HEK293 (cell line): ENCODE measurements at regions of chrX and their contacts with region 1.

Region 1: DNA sequence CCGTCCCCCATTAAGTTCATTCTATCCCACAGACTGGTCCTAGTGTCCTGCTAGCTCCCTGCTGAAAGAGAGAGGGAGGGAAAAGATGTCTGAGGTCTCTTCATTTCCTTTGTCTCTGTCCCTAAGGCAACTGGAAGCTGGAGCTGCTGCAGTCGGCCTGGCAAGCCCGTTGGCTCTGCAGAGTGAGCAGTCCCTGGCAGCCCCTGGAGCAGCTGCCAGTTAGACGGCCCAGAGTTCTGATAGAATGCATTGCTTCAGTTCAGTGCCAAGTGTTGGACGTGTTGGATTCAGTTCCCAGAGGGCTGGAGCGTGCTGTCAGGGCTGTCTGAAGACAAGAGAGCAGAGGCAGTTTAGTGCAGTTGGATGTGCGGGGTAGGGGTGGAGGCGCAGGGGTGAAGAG is 975 bp downstream of the KCNE5 start:
- H3K4me3 ChIP-seq: no peak overlapping the region
- H3K27ac ChIP-seq: no peak overlapping the region
- H3K4me1 ChIP-seq: no peaks in the 10 kb centered on the region
- CTCF ChIP-seq: no peak

Region 2: GRCh38 chrX:109635176-109635575 is 11.2 kb after region 1 on chrX:
- CTCF ChIA-PET with region 1: interaction called, 29 read pairs
- POLR2A ChIA-PET with region 1: no interaction called
- H3K4me3 ChIP-seq: no peak overlapping the region
- H3K27ac ChIP-seq: no peak overlapping the region
- H3K4me1 ChIP-seq: no peaks in the 10 kb centered on the region
- CTCF ChIP-seq: 0 out of 2 replicates have a peak, but pooled peaks have one; percentile 7

Region 3: DNA sequence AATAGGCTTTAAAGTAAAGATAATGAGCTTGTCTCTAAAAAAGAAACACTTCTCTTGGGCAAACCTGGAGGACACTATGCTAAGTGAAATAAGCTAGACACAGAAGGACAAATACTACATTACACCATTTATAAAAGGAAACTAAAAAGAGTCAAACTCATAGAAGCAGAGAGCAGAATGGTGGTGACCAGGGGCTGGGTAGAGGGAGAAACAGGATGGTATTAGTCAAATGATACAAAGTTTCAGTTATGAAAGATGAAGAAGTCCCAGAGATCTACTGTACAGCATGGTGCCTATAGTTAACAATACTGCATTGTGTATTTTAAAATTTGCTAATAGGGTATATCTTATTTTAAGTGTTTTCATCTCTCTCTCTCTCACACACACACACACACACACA is 80.6 kb after region 1 on chrX:
- CTCF ChIA-PET with region 1: no interaction called
- POLR2A ChIA-PET with region 1: no interaction called
- H3K4me3 ChIP-seq: no peak overlapping the region
- H3K27ac ChIP-seq: no peak overlapping the region
- H3K4me1 ChIP-seq: peaks cover 3% of the 10 kb centered on the region; the same call in 1 of the 2 replicates
- CTCF ChIP-seq: no peak